Colonic mucosa (tissue), 4 donors: ENCODE measurements at regions of chr15 and their contacts with region 1.

Region 1: DNA sequence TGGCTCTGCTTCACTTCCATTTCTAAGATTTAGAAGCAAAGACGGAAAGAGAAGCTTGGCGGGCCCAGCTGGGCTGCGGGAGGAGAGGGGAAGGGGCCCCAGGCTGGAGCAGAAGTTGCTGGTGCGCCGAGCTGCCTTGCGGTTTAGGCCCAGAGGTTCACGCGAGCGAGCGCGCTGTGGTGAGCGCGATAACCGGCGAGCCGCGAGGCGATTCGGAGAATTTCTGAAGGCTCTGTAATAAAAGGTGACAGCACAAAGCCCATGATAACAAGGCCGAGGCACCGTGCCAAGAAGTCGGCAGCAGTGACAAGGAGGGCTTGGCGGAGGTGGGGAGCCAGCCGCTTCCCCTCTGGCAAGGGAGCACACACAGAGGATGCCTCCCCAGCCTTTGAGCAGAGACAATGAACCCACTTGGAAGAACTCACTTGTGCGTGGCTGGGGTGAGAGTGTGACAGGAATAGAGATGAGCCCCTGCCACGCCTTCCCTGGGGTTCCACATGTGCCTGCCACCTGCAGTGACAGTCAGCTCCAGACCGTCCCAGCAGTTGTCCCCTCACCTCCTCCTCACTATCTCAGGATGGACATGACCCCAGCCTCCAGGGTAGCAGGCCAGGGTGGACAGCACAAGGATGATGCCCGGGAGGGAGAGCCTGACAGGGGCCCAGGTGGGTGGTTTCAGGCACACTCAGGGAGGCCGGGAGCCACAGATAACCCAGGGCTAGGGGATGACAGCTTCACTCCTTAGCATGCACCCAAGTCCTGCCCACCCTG is 315.2 kb downstream of the UACA start:
- DNase-seq: peak; percentile 37
- H3K4me3 ChIP-seq: no peak overlapping the region
- H3K27ac ChIP-seq: no peak overlapping the region
- H3K4me1 ChIP-seq: no peaks in the 10 kb centered on the region
- H3K27me3 ChIP-seq: peaks cover 6% of the 10 kb centered on the region
- CTCF ChIP-seq: no peak

Region 2: GRCh38 chr15:70395164-70395563 is 52.9 kb before region 1 on chr15:
- intact Hi-C with region 1: loop called (anchors 5 kb)
- DNase-seq: no peak
- H3K4me3 ChIP-seq: no peak overlapping the region
- H3K27ac ChIP-seq: no peak overlapping the region
- H3K4me1 ChIP-seq: no peaks in the 10 kb centered on the region
- H3K27me3 ChIP-seq: no peaks in the 10 kb centered on the region
- CTCF ChIP-seq: no peak

Region 3: GRCh38 chr15:71357321-71357732 is 909.2 kb after region 1 on chr15:
- intact Hi-C with region 1: no loop called
- DNase-seq: peak; percentile 69
- H3K4me3 ChIP-seq: no peak overlapping the region
- H3K27ac ChIP-seq: no peak overlapping the region
- H3K4me1 ChIP-seq: peaks cover 7% of the 10 kb centered on the region
- H3K27me3 ChIP-seq: no peaks in the 10 kb centered on the region
- CTCF ChIP-seq: no peak